ENCODE measurements at regions of chr7 and their contacts with region 1.

Region 1: DNA sequence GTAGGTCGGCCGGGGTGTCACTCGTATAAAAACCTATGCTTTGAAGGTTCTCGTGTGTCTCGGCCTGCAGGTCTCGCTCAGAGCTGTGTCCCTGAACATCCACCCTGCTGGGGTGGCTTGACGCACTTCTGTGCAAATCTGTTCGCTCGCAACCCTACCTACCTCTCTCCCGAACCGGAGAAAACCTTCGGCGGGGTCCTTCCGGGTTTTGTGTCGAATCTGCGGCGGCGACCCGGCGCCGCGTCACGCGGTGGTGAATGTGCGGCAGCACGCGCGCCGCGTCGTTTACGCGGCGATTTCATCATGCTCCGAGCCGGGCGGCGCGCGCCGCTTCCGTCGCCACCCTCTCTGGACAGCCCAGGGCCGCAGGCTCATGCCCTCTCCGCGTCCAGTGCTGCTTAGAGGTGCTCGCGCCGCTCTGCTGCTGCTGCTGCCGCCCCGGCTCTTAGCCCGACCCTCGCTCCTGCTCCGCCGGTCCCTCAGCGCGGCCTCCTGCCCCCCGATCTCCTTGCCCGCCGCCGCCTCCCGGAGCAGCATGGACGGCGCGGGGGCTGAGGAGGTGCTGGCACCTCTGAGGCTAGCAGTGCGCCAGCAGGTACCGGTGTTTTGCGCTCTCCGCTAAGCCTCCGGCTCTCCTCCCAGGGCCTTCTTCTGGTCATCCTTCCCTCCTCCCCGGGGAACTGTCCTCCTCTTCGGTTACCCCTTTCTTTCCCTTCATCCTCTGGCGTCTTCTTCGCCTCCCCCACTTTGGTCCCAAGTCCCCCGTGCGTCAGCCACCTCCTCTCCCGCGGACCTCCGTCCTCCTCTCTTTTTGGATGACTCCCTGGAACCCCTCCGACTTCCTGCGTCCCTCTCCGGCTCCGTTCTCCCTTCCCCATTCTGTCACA is at the start of gene GARS1:
- DNase-seq: peak; percentile 90
- H3K4me3 ChIP-seq: peak within 1 kb of the TSS; percentile 91 to 97 (median 93)
- H3K27ac ChIP-seq: peak within 1 kb of the TSS; percentile 92
- H3K4me1 ChIP-seq: peaks cover 8% of the 10 kb centered on the region
- H3K27me3 ChIP-seq: no peaks in the 10 kb centered on the region
- CTCF ChIP-seq: no peak
- total RNA-seq, gene GARS1: 419 to 470 TPM

Region 2: GRCh38 chr7:30178748-30179436 is 415.9 kb before region 1 on chr7:
- CTCF ChIA-PET with region 1: no interaction called
- dilution Hi-C with region 1: no loop called
- in situ Hi-C with region 1: no loop called
- intact Hi-C with region 1: no loop called
- DNase-seq: no peak
- H3K4me3 ChIP-seq: no peak overlapping the region
- H3K27ac ChIP-seq: no peak overlapping the region
- H3K4me1 ChIP-seq: peaks cover under 1% of the 10 kb centered on the region
- H3K27me3 ChIP-seq: no peaks in the 10 kb centered on the region
- CTCF ChIP-seq: no peak

Region 3: GRCh38 chr7:30618080-30618676 is 23.4 kb after region 1 on chr7:
- CTCF ChIA-PET with region 1: no interaction called
- dilution Hi-C with region 1: no loop called
- in situ Hi-C with region 1: no loop called
- intact Hi-C with region 1: loop called (anchors 2 kb)
- DNase-seq: no peak
- H3K4me3 ChIP-seq: no peak overlapping the region
- H3K27ac ChIP-seq: no peak overlapping the region
- H3K4me1 ChIP-seq: no peaks in the 10 kb centered on the region
- H3K27me3 ChIP-seq: no peaks in the 10 kb centered on the region
- CTCF ChIP-seq: no peak

Region 4: GRCh38 chr7:30630986-30631385 is 36.2 kb after region 1 on chr7:
- CTCF ChIA-PET with region 1: no interaction called
- dilution Hi-C with region 1: no loop called
- in situ Hi-C with region 1: no loop called
- intact Hi-C with region 1: loop called (anchors 5 kb)
- DNase-seq: no peak
- H3K4me3 ChIP-seq: no peak overlapping the region
- H3K27ac ChIP-seq: no peak overlapping the region
- H3K4me1 ChIP-seq: no peaks in the 10 kb centered on the region
- H3K27me3 ChIP-seq: no peaks in the 10 kb centered on the region
- CTCF ChIP-seq: no peak

Region 5: GRCh38 chr7:30650421-30650808 is 55.6 kb after region 1 on chr7:
- CTCF ChIA-PET with region 1: no interaction called
- dilution Hi-C with region 1: no loop called
- in situ Hi-C with region 1: no loop called
- intact Hi-C with region 1: no loop called
- DNase-seq: no peak
- H3K4me3 ChIP-seq: no peak overlapping the region
- H3K27ac ChIP-seq: no peak overlapping the region
- H3K4me1 ChIP-seq: no peaks in the 10 kb centered on the region
- H3K27me3 ChIP-seq: no peaks in the 10 kb centered on the region
- CTCF ChIP-seq: no peak